HEK293T (cell line): ENCODE measurements at regions of chr12 and their contacts with region 1.

Region 1: GRCh38 chr12:53806721-53807120 is 54.9 kb upstream of the CISTR start:
- DNase-seq: no peak

Region 2: DNA sequence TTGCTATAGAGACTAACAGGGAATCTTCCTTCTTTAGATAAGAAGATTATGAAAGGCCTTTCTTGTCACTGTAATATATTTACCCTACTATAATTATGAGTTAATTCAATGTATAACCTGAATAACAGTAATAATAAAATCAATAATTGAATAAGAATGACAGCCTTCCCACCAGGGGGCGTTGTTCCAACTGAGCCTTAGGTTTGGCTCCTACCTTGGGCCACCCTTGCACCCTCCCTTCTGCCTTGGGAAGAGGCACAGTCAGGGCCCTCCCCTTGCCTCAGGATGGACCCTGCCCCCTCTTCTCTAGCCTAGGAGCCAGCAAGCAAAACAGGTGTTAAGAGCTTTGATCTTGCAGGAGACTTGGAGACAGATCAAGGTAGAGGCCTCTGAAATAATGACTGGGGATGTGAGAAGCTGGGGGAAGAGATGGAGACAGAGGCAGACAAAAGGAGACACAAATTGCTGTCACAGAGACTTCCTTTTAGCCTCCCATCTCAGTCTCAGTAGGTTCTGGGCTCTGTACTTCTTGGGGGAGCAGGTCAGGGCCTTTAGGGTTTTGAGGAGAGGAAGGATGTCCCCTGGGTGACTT is 14.9 kb before region 1 on chr12:
- CTCF ChIA-PET with region 1: interaction called, 15 read pairs
- POLR2A ChIA-PET with region 1: no interaction called
- DNase-seq: peak; percentile 59

Region 3: DNA sequence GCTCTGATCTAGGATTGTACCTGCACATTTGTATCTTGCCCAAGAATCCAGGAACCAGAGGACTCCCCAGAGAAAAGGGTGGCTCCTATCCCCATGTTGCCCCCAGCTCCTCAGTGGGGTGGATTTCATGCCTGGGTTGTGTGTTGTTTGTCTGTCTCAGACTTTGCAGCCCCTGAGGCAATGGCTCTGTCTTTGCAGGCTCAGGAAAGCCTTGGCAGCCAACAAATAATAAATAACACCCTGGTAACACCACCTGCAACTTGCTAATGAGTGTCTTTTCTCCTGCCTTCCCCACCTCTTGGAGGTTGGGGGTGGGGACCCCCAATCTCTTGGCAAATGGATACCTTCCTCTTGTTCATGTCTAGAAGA is 10.3 kb after region 1 on chr12:
- CTCF ChIA-PET with region 1: no interaction called
- POLR2A ChIA-PET with region 1: no interaction called
- DNase-seq: no peak